ENCODE measurements at regions of chr20 and their contacts with region 1.

Region 1: GRCh38 chr20:9978397-9979004 is 56.3 kb upstream of the ANKEF1 start:
- DNase-seq: peak in 28 of 42 donors; percentile 9 to 81 (median 52)

Region 2: DNA sequence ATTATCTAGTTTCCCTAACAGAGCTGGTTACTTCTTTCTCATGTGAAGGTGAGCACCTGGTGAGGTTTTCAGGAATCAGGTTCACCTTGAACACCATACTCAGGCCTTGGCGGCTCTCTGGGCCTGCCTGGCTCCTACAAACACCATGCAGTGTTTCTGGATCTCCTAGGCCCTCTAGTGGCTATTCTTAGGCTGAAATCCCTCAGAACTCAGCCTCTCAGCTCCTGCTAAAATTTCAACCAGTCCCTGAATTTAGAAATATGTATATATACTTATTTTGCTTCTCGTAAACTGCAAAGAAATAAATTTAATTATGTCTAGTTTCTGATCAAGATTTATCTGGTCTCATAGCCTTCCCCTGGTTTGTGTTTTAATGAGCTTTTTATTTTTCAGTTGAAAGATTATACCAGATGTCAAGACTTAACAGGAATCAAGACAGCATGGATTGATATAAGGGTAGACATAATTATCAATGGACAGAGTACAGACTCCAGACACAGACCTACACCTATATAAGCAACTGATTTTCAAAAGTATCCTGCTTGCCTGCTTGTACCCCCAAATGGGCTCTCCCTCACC is 112.2 kb after region 1 on chr20:
- intact Hi-C with region 1: loop called (anchors 5 kb)
- DNase-seq: peak in 41 of 42 donors; percentile 8 to 78 (median 47)

Region 3: DNA sequence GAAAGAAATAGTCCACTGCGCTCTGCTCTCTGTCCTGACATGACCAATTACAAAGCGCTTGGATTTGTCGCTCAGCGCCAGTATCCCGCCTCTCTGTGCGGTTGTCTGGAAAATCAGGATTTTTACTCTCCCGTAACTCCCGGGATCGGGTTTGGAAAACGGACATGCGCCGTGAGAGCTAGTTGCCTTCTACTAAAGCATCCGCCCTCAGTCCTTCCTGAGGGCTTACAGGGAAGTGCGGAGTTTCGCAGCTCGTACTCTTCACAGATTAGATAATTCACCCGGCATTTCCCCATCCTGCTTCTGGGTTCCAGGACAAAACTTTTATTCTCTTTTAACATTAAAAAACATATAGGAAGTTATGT is 455.9 kb after region 1 on chr20:
- intact Hi-C with region 1: loop called (anchors 5 kb)
- DNase-seq: peak; percentile 84 to 98 (median 93)

Measured in head of caudate nucleus (tissue), 42 donors.